Posterior vena cava (tissue), 2 donors: ENCODE measurements at regions of chr5 and their contacts with region 1.

Region 1: DNA sequence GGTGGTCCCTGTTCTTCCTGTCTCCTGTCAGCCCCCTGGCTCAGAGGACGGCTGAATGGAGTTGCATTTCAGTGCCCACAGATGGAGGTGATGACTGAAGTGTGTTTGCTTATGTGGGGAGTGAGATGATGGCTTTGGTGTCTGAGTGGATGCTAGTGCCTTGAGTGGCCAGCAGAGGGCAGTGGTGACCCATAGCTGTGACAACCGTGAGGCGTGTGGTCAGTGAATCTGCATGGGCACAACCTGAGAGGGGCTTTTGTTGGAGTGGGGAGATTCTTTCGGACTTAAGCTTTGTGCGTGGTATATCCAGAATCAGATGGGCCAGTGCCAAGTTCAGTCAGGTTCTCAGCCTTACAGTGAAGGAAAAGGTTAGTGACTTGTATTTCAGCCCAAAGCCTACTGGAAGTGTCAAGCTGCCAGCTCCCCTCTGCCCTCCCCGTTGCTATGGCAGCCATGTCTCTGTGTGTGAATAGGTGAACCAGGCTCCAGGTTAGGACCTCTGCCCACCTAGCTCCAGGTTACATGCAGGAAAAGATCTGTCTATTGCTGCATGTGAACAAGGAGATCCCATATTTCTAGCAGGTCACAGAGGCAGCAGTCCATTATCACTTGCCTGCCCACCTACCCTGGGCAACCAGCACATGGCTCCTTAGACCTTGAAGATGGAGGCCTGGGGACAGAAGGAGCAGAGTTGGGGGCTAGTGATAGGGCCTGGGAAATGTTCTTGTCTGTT is 14.7 kb upstream of the CXXC5 start:
- DNase-seq: peak; percentile 86

Region 2: DNA sequence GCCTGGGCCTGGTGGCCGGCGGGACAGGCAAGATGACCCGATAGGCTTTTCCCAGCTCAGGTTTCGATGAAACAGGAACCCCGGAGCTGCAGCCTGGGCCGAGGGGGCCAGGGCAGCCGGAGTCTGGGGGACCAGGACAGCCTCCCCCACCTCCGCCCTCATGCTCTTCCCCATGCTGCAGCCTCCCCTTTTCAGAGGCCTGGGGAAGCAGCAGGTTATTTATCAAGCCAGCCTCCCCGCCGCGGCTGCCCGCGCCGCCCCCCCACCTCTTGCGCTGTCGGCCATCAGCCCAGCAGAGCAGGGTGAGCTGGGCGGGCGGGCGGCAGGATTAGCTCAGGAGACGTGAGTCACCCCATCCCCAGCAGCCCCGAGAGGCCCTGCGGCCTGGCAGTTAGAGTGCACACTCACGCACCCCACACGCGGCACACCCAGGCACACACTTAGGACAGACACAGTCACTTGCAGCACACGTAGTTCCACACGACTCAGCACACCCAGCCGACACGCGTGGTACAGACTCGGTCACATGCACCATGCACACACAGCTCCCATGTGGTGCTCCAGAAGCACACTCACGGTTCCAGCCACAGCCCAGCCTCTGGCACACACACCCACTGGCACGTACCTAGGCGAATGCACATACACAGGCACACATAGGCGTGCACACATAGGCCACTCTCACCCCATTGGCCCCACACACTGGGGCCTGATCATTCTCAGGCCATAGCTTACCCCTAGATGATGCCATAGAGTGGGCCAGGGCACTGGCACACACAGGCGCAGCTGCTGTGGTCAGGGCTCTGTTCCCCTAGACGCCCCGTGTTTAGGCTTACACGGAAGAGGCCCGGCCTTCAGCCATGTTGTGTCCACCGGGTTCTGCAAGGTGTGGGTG is 27.7 kb after region 1 on chr5:
- intact Hi-C with region 1: no loop called
- DNase-seq: peak; percentile 97

Region 3: GRCh38 chr5:139690064-139690802 is 56.8 kb after region 1 on chr5:
- intact Hi-C with region 1: loop called in 1 of 2 experiments (anchors 2 kb)
- DNase-seq: peak; percentile 88

Region 4: DNA sequence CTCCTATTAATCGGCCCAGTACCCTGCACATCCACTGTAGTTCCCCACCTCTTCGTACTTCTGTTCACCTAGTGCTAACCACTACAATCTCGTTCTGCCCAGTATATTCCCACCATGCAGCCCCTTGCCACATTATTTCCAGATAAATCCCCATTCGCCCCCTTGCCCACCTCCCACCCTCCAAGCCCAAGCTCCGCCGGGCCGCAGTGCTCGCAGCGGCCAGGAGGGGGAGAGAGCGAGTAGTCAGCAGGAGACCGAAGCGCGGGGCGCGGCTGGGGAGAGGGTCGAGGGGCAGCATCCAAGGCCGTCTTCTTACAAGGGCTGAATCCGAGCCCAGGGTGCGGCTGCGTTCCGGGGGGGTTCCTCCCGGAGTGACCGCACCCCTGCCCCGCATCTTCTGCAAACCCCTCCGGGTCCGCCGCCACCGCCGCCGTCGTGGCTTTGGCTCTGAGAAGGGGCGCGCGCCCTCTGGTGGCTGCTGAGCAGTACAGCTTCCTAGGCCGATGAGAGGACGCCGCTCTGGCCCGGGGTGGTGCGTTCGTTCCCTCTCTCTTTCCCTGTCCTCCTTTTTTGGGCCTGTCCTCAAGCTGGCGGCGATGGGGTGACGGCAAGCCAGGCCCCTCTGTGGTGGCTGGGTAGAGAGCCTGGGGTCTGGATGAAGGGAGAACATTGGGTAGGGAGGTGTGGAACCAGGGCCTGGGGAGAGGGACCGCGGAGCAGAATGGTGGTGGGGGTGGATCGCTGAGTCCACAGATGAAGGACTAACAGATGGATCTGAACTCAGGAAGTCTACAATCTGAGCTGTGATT is 132.2 kb after region 1 on chr5:
- intact Hi-C with region 1: loop called (anchors 2 to 5 kb)
- DNase-seq: peak; percentile 92

Region 5: GRCh38 chr5:140118294-140118936 is 485.0 kb after region 1 on chr5:
- intact Hi-C with region 1: no loop called
- DNase-seq: no peak